Activated naive CD8-positive, alpha-beta T cell treated with anti-CD3 and anti-CD28 coated beads, Interleukin-2, amount 10 ng/mL, durations not matched to agents 7 days and 5 days (primary cell): ENCODE measurements at regions of chr2 and their contacts with region 1.

Region 1: GRCh38 chr2:101308432-101309210 is at the start of gene RNF149:
- DNase-seq: peak; percentile 97
- ATAC-seq: peak; percentile 78
- H3K4me3 Mint-ChIP-seq: peak within 1 kb of the TSS; percentile 98
- H3K27ac Mint-ChIP-seq: peak within 1 kb of the TSS; percentile 96
- H3K4me1 Mint-ChIP-seq: peaks cover 50% of the 10 kb centered on the region
- H3K27me3 Mint-ChIP-seq: no peaks in the 10 kb centered on the region
- total RNA-seq, gene RNF149: 90.1 to 90.3 TPM

Region 2: DNA sequence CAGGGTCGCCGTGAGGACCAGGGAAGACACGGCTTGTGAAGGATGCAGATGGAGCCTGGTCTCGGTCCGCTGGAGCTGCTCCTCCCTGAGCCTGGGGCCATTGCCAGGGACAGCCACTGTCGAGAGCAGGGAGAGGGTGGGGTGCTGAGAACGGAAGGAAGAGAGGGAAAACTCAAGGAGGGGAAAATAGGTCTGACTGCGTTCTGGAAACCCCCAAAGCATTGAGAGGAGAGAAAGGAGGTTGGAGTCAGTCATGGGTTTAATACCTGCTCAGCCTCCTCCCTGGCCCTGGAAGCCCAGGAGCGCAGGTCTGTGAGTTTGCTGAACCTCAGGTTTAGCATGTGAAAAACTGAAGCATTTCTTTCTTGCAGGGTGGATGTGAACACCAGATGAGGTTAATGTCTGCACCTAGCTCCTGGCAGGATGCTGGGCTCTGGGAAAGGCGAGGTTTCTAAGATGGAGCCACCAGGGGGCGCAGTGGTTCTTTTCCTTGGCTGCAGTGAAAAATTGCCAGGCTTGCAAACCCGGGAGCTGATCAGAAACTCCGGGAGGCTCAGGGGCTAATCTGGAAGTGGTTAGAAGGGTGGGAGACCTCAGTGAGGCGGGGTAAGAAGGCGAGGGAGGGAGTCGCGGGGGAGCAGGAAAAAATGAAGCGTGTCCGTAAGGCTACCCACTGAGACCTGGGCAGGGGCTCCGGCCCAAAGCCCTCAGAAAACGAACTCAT is 33.4 kb after region 1 on chr2:
- POLR2A ChIA-PET with region 1: interaction called, 18 read pairs
- DNase-seq: peak; percentile 77
- ATAC-seq: peak; percentile 53
- H3K4me3 Mint-ChIP-seq: no peak overlapping the region
- H3K27ac Mint-ChIP-seq: no peak overlapping the region
- H3K4me1 Mint-ChIP-seq: peaks cover 25% of the 10 kb centered on the region
- H3K27me3 Mint-ChIP-seq: peaks cover 3% of the 10 kb centered on the region